ENCODE measurements at regions of chr17 and their contacts with region 1.

Region 1: DNA sequence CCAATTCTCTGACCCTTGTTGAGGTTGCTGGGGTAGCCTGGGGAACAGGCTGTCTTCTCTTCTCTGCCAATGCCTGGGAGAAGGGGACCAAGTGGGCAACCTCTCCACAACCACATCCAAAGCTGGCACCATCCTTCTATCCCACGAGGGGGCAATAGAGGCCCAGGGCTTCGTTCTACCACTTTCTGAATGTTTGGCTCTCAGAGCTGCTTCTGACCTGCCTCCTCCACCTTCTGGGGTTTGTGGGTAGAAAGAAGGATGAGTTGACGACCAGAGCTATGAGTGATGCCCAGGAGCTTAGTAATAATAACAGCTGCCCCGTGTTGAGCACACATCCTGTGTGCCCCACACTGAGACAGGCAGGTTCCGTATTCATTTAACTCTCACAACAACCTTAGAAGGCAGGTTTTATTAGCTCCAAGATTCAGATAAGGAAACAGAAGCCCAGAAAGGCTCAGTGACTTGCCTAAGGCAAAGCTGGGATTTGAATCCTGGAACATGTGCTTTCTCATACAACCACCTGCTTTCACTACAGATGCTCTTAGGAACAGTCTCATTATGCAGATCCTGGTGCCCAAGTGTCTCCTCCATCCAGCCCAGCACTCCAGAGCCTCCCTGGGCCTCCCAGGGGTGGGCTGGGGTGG is 11.1 kb downstream of the TSPOAP1 start:
- DNase-seq: peak; percentile 57 to 92 (median 76)
- ATAC-seq: peak; percentile 97
- H3K4me3 ChIP-seq: no peak overlapping the region
- H3K4me3 Mint-ChIP-seq: peak overlapping the region; percentile 21
- H3K27ac ChIP-seq: peak overlapping the region; percentile 36 to 64
- H3K27ac Mint-ChIP-seq: peak overlapping the region; percentile 91
- H3K4me1 ChIP-seq: peaks cover 11% of the 10 kb centered on the region
- H3K4me1 Mint-ChIP-seq: peaks cover 13% of the 10 kb centered on the region
- H3K27me3 ChIP-seq: no peaks in the 10 kb centered on the region
- H3K27me3 Mint-ChIP-seq: no peaks in the 10 kb centered on the region
- CTCF ChIP-seq: peak; percentile 78

Region 2: DNA sequence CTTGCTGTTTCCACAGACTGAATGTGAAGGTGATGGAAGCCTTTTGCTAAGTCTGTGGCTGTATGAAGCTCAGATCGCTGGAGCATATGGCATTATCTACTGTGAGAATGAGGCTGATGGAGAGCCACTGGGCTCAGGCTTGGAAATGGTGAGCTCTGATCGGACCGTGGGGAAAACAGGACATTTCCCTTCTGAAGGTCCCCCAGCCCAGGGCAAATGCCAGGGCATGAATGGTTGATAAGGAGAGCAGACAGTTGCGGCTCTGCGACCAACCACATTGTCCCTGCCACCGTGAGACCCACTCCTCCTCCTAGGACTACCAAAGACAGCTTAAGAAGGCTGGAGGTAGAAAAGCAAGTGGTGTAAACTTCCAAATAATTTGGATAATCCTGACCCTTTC is 357.6 kb before region 1 on chr17:
- CTCF ChIA-PET with region 1: no interaction called
- POLR2A ChIA-PET with region 1: no interaction called
- intact Hi-C with region 1: no loop called
- DNase-seq: no peak
- ATAC-seq: no peak
- H3K4me3 ChIP-seq: no peak overlapping the region
- H3K4me3 Mint-ChIP-seq: no peak overlapping the region
- H3K27ac ChIP-seq: no peak overlapping the region
- H3K27ac Mint-ChIP-seq: no peak overlapping the region
- H3K4me1 ChIP-seq: peaks cover 15% of the 10 kb centered on the region
- H3K4me1 Mint-ChIP-seq: peaks cover 16% of the 10 kb centered on the region
- H3K27me3 ChIP-seq: peaks cover 0 to 5% of the 10 kb centered on the region in 2 experiments
- H3K27me3 Mint-ChIP-seq: peaks cover 7% of the 10 kb centered on the region
- CTCF ChIP-seq: no peak

Region 3: DNA sequence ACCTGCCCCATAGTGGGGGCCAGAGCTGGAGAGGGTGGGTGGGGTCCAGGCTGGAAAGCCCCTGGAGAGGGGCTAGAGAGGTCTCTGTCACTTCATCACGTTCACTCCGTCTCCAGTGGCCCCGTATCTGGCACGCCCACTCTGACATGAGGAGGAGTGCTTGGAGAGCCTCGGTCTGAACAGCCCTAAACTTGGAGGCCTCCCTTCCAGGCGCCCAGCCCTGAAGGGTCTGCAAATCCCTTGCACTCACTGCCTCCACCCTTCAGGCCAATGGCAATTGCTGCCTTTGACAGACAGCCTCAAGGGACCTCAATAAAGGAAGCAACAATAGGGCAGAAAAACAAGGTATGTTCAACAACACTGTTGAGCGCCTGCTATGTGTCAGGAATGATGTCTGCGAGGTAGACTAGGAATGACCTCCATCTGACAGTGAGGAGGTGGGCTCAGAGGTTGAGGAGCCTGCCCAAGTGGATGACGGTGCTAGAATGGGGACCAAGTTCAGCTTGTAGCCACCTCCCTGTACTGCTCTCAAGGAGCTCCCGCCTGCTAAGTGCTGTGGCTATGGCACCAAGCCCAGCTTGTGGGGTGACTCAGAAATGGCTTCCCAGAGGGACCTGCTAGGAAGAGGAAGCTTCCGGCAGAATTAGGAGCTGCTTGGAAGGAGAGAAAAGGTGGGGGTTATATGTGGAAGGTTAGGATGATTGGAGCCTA is 128.0 kb before region 1 on chr17:
- CTCF ChIA-PET with region 1: no interaction called
- POLR2A ChIA-PET with region 1: no interaction called
- intact Hi-C with region 1: no loop called
- DNase-seq: no peak
- ATAC-seq: no peak
- H3K4me3 ChIP-seq: no peak overlapping the region
- H3K4me3 Mint-ChIP-seq: no peak overlapping the region
- H3K27ac ChIP-seq: no peak overlapping the region
- H3K27ac Mint-ChIP-seq: no peak overlapping the region
- H3K4me1 ChIP-seq: no peaks in the 10 kb centered on the region
- H3K4me1 Mint-ChIP-seq: no peaks in the 10 kb centered on the region
- H3K27me3 ChIP-seq: no peaks in the 10 kb centered on the region
- H3K27me3 Mint-ChIP-seq: peaks cover 16% of the 10 kb centered on the region
- CTCF ChIP-seq: no peak

Region 4: DNA sequence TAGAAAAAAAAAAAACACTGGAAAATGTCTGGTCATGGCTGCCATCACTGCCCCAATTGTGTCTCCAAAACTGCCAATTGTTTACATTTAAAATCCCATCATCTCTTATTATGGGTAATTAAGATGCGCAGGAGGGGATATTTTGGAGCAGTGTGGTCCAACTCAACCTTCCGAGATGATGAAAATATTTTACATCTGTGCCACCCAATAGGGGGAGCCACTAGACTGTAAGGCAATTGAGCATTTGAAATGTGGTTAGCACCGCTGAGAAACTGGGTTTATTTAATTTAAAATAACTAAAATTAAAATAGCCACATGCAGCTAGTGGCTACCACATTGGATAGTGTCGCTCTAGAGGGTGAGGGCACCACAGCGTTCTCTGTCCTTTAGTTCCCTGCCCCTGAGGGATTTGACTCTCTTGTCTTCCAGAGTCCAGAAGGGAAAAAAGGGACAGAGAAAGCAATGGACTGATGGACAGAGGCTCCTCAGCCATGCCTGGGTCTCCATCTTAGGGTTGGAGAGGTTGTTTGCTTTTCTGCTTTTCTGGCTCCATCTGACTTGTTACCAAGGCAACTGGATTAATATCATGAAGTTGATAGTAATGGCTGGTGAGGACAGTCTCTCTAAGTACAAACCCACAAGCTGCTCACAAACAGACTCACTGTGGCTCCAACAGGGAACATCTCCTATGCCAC is 40.3 kb before region 1 on chr17:
- CTCF ChIA-PET with region 1: no interaction called
- POLR2A ChIA-PET with region 1: no interaction called
- intact Hi-C with region 1: no loop called
- DNase-seq: peak in 2 of 9 experiments; percentile 42 to 49
- ATAC-seq: no peak
- H3K4me3 ChIP-seq: no peak overlapping the region
- H3K4me3 Mint-ChIP-seq: no peak overlapping the region
- H3K27ac ChIP-seq: no peak overlapping the region
- H3K27ac Mint-ChIP-seq: no peak overlapping the region
- H3K4me1 ChIP-seq: peaks cover 4% of the 10 kb centered on the region
- H3K4me1 Mint-ChIP-seq: peaks cover 5% of the 10 kb centered on the region
- H3K27me3 ChIP-seq: peaks cover 0 to 2% of the 10 kb centered on the region in 2 experiments
- H3K27me3 Mint-ChIP-seq: peaks cover 21% of the 10 kb centered on the region
- CTCF ChIP-seq: peak; percentile 35

Region 5: GRCh38 chr17:58329035-58329809 is 11.7 kb after region 1 on chr17:
- CTCF ChIA-PET with region 1: interaction called, 50 read pairs
- POLR2A ChIA-PET with region 1: interaction called, 773 read pairs
- intact Hi-C with region 1: loop called (anchors 1 kb)
- DNase-seq: peak in 8 of 9 experiments; percentile 56 to 90 (median 77)
- ATAC-seq: peak; percentile 36
- H3K4me3 ChIP-seq: peak overlapping the region; percentile 90 to 99
- H3K4me3 Mint-ChIP-seq: peak overlapping the region; percentile 92
- H3K27ac ChIP-seq: peak overlapping the region; percentile 48 to 99
- H3K27ac Mint-ChIP-seq: peak overlapping the region; percentile 96
- H3K4me1 ChIP-seq: peaks cover 47% of the 10 kb centered on the region
- H3K4me1 Mint-ChIP-seq: peaks cover 54% of the 10 kb centered on the region
- H3K27me3 ChIP-seq: no peaks in the 10 kb centered on the region
- H3K27me3 Mint-ChIP-seq: no peaks in the 10 kb centered on the region
- CTCF ChIP-seq: peak; percentile 84

Region 6: GRCh38 chr17:58352014-58352842 is 34.7 kb after region 1 on chr17 and contains the start of gene SUPT4H1:
- CTCF ChIA-PET with region 1: interaction called, 587 read pairs
- POLR2A ChIA-PET with region 1: interaction called, 773 read pairs
- intact Hi-C with region 1: no loop called
- DNase-seq: peak; percentile 81 to 97 (median 91)
- ATAC-seq: peak; percentile 88
- H3K4me3 ChIP-seq: peak within 1 kb of the TSS; percentile 69 to 70
- H3K4me3 Mint-ChIP-seq: peak within 1 kb of the TSS; percentile 100
- H3K27ac ChIP-seq: peak within 1 kb of the TSS; percentile 75 to 81
- H3K27ac Mint-ChIP-seq: peak within 1 kb of the TSS; percentile 100
- H3K4me1 ChIP-seq: peaks cover 46% of the 10 kb centered on the region
- H3K4me1 Mint-ChIP-seq: peaks cover 60% of the 10 kb centered on the region
- H3K27me3 ChIP-seq: no peaks in the 10 kb centered on the region
- H3K27me3 Mint-ChIP-seq: no peaks in the 10 kb centered on the region
- CTCF ChIP-seq: no peak
- total RNA-seq, gene SUPT4H1: 45.2 to 59.7 TPM

Region 7: DNA sequence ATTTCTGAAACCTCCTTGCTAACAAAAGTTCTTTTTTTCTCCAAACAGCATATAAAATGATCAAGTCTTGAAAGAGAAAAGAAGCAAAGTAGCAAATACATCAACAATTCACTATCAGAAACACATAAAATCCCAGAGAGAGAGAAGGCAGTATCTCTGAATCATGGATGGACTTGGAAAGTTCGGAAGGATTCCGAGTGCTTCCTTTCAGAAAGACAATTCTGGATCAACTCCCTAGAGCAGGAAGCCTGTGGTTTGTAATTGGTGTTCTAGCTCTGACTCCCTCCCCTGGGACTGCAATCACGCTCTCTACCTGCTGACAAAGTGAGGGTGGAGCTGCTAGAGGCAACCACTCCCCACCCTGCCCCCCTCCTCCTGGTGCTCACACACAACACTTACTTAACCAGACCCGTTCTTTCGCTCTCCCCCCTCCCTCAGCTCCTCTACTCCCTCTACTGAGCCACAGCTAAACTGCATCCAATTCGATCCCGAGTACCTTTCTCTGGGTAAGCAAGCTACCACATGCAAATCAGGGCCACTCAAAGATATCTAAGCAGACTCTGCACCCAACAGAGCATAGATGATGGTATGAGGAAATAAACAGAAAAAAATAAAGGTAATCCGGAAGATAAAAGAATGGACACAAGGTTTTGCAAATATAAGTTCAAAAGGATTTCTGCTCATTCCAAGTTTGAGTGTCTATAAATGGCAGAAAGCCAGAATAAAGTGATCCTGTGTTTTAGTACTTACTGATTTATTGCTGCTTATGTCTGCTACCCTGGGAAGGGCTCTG is 100.0 kb after region 1 on chr17 and contains the start of gene RNF43:
- CTCF ChIA-PET with region 1: interaction called, 109 read pairs
- POLR2A ChIA-PET with region 1: interaction called, 15 read pairs
- intact Hi-C with region 1: loop called (anchors 1 kb)
- DNase-seq: peak; percentile 70 to 96 (median 87)
- ATAC-seq: peak; percentile 100
- H3K4me3 ChIP-seq: no peak within 1 kb of the TSS
- H3K4me3 Mint-ChIP-seq: no peak within 1 kb of the TSS
- H3K27ac ChIP-seq: peak within 1 kb of the TSS in 1 of 2 experiments; percentile 47
- H3K27ac Mint-ChIP-seq: peak within 1 kb of the TSS; percentile 3
- H3K4me1 ChIP-seq: peaks cover 15% of the 10 kb centered on the region
- H3K4me1 Mint-ChIP-seq: peaks cover 17% of the 10 kb centered on the region
- H3K27me3 ChIP-seq: no peaks in the 10 kb centered on the region
- H3K27me3 Mint-ChIP-seq: no peaks in the 10 kb centered on the region
- CTCF ChIP-seq: peak; percentile 75
- total RNA-seq, gene RNF43: 0.61 to 1.0 TPM

Region 8: GRCh38 chr17:58487589-58488427 is 170.3 kb after region 1 on chr17 and contains the start of gene HSF5:
- CTCF ChIA-PET with region 1: interaction called, 17 read pairs
- POLR2A ChIA-PET with region 1: interaction called, 12 read pairs
- intact Hi-C with region 1: loop called (anchors 1 kb)
- DNase-seq: peak; percentile 52 to 89 (median 76)
- ATAC-seq: peak; percentile 94
- H3K4me3 ChIP-seq: peak within 1 kb of the TSS; percentile 29 to 37
- H3K4me3 Mint-ChIP-seq: peak within 1 kb of the TSS; percentile 69
- H3K27ac ChIP-seq: peak within 1 kb of the TSS; percentile 22 to 40
- H3K27ac Mint-ChIP-seq: peak within 1 kb of the TSS; percentile 70
- H3K4me1 ChIP-seq: peaks cover 14% of the 10 kb centered on the region
- H3K4me1 Mint-ChIP-seq: peaks cover 16% of the 10 kb centered on the region
- H3K27me3 ChIP-seq: no peaks in the 10 kb centered on the region
- H3K27me3 Mint-ChIP-seq: no peaks in the 10 kb centered on the region
- CTCF ChIP-seq: peak; percentile 68
- total RNA-seq, gene HSF5: 1.1 to 1.6 TPM

Measured in CD8-positive, alpha-beta T cell (primary cell).